Colonic mucosa (tissue), 4 donors: ENCODE measurements at regions of chr1 and their contacts with region 1.

Region 1: DNA sequence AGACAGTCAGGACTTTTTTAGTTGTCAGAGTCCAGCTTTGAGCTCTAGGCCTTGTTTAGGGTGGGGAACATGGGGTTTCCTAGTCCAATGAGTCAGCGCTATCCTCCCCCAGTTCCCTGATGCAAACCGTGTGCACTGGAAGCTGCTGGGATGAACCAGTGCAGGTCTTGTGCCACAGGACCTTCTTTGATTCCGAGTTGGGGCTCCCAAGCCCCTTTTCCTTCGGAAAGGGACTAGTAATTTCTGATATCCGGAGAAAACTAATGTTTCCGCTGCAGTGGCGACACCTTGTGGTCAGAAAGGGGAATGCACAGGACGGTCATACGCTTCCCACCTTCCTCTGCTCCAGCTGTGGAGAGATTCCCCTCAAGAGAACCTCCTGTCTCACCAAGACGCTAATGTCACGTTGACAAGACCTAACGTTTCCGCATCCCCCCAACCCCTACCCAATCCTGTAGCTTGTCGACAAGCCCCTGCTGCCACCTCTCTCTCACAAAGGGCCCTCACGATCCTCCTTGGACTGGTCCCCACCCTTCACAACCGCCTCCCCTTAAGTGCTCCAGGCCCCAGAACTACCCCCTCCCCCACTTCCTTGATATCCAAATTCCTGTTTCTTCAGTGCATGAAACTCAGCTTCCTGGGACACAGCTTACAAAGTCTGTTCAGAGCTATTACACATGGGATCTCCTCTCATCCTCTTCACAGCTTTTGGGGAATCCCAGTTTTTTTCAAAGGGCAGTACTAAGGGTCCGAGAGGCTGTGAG is 30.9 kb downstream of the GPA33 start:
- DNase-seq: peak; percentile 78
- H3K4me3 ChIP-seq: no peak overlapping the region
- H3K27ac ChIP-seq: no peak overlapping the region
- H3K4me1 ChIP-seq: no peaks in the 10 kb centered on the region
- H3K27me3 ChIP-seq: no peaks in the 10 kb centered on the region
- CTCF ChIP-seq: peak; percentile 96

Region 2: GRCh38 chr1:166884040-166884642 is 175.1 kb before region 1 on chr1:
- intact Hi-C with region 1: loop called (anchors 5 kb)
- DNase-seq: peak; percentile 58
- H3K4me3 ChIP-seq: peak overlapping the region; percentile 22
- H3K27ac ChIP-seq: no peak overlapping the region
- H3K4me1 ChIP-seq: peaks cover 7% of the 10 kb centered on the region
- H3K27me3 ChIP-seq: peaks cover 8% of the 10 kb centered on the region
- CTCF ChIP-seq: peak; percentile 72

Region 3: GRCh38 chr1:167401260-167401873 is 342.1 kb after region 1 on chr1:
- intact Hi-C with region 1: no loop called
- DNase-seq: peak; percentile 61
- H3K4me3 ChIP-seq: no peak overlapping the region
- H3K27ac ChIP-seq: no peak overlapping the region
- H3K4me1 ChIP-seq: no peaks in the 10 kb centered on the region
- H3K27me3 ChIP-seq: no peaks in the 10 kb centered on the region
- CTCF ChIP-seq: peak; percentile 45